ENCODE measurements at regions of chr4 and their contacts with region 1.

Region 1: GRCh38 chr4:77418333-77419038 is 187.1 kb upstream of the CXCL13 start:
- DNase-seq: peak; percentile 24
- ATAC-seq: peak; percentile 68
- H3K4me3 Mint-ChIP-seq: no peak overlapping the region
- H3K27ac Mint-ChIP-seq: no peak overlapping the region
- H3K4me1 Mint-ChIP-seq: no peaks in the 10 kb centered on the region
- H3K27me3 Mint-ChIP-seq: peaks cover 7% of the 10 kb centered on the region
- CTCF ChIP-seq: peak; percentile 15

Region 2: DNA sequence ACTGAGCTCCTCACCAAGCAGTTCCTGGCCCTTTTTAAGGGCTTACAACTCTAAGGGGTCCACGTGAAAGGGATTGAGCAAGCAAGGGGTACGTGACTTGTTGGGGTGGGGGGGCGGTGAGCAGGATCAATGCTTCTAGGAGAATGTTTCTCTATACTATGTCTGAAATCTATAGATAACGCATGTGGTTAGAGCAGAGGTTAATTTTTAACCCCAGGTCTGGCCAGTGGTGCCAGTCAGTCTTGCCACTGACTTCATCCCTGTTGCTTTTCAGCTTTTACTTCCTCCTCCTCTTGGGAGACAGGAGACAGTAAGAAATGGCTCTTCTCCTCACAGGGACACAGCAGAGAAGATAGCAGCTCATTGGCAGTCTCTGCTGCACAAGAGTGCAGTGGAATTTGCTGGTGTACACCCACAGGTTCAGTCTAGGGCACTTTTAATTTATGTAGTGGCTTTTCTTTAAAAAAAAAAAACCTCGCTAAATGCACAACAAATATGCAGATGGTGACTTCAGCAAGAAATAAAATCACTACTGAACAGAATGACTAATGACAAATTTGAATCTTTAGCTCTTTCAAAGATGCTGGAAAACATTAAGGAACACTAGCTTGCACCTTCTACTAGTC is 71.0 kb before region 1 on chr4:
- CTCF ChIA-PET with region 1: no interaction called
- POLR2A ChIA-PET with region 1: no interaction called
- intact Hi-C with region 1: no loop called
- DNase-seq: no peak
- ATAC-seq: no peak
- H3K4me3 Mint-ChIP-seq: no peak overlapping the region
- H3K27ac Mint-ChIP-seq: no peak overlapping the region
- H3K4me1 Mint-ChIP-seq: no peaks in the 10 kb centered on the region
- H3K27me3 Mint-ChIP-seq: peaks cover 3% of the 10 kb centered on the region
- CTCF ChIP-seq: no peak

Region 3: GRCh38 chr4:77433418-77433733 is 14.9 kb after region 1 on chr4:
- CTCF ChIA-PET with region 1: interaction called, 10 read pairs
- POLR2A ChIA-PET with region 1: no interaction called
- intact Hi-C with region 1: no loop called
- DNase-seq: peak; percentile 20
- ATAC-seq: peak; percentile 84
- H3K4me3 Mint-ChIP-seq: no peak overlapping the region
- H3K27ac Mint-ChIP-seq: no peak overlapping the region
- H3K4me1 Mint-ChIP-seq: peaks cover 11% of the 10 kb centered on the region
- H3K27me3 Mint-ChIP-seq: no peaks in the 10 kb centered on the region
- CTCF ChIP-seq: peak; percentile 67

Region 4: GRCh38 chr4:77443941-77444340 is 25.5 kb after region 1 on chr4:
- CTCF ChIA-PET with region 1: no interaction called
- POLR2A ChIA-PET with region 1: no interaction called
- intact Hi-C with region 1: no loop called
- DNase-seq: no peak
- ATAC-seq: no peak
- H3K4me3 Mint-ChIP-seq: no peak overlapping the region
- H3K27ac Mint-ChIP-seq: no peak overlapping the region
- H3K4me1 Mint-ChIP-seq: no peaks in the 10 kb centered on the region
- H3K27me3 Mint-ChIP-seq: peaks cover 2% of the 10 kb centered on the region
- CTCF ChIP-seq: no peak

Region 5: DNA sequence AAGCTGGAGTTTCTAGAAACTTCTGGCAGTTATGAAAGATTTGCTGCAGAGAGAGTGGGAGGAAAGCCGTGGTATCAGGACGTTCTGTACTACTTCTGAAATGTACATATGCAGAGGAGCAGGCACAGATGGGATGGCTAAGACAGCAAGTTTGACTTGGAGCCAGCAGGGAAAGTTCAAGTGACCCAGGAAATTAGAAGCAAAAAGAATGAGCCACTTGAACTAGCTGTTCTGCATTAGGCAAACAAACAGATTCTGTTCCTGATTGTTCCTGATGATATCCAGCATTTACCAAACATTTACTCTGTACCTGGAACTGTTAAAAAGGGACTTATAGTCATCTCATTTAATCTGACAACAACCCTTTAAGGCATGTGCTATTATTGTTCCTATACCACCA is 145.7 kb after region 1 on chr4:
- CTCF ChIA-PET with region 1: no interaction called
- POLR2A ChIA-PET with region 1: no interaction called
- intact Hi-C with region 1: no loop called
- DNase-seq: no peak
- ATAC-seq: no peak
- H3K4me3 Mint-ChIP-seq: no peak overlapping the region
- H3K27ac Mint-ChIP-seq: no peak overlapping the region
- H3K4me1 Mint-ChIP-seq: no peaks in the 10 kb centered on the region
- H3K27me3 Mint-ChIP-seq: peaks cover 27% of the 10 kb centered on the region
- CTCF ChIP-seq: no peak

Region 6: DNA sequence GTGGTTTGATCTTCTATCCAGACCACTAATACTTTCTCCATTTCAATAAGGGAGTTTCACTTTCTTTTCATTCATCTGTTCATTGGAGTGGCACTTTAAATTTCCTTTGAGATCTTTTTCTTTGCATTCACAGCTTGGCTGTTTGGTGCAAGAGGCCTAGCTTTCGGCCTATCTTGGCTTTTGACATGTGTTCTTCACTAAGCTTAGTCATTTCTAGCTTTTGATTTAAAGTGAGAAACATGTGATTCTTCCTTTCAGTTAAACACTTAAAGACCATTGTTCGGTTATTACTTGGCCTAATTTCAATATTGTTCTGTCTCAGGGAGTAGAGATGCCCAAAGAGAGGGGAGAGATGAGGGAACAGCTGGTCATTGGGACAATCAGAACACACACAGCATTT is 211.4 kb after region 1 on chr4:
- CTCF ChIA-PET with region 1: no interaction called
- POLR2A ChIA-PET with region 1: no interaction called
- intact Hi-C with region 1: no loop called
- DNase-seq: peak; percentile 29
- ATAC-seq: peak; percentile 84
- H3K4me3 Mint-ChIP-seq: no peak overlapping the region
- H3K27ac Mint-ChIP-seq: peak overlapping the region; percentile 1
- H3K4me1 Mint-ChIP-seq: peaks cover 14% of the 10 kb centered on the region
- H3K27me3 Mint-ChIP-seq: no peaks in the 10 kb centered on the region
- CTCF ChIP-seq: no peak

Measured in activated CD8-positive, alpha-beta T cell treated with anti-CD3 and anti-CD28 coated beads for 36 hours (primary cell).